ENCODE measurements at regions of chr3 and their contacts with region 1.

Region 1: GRCh38 chr3:31999907-32000439 is 18.4 kb downstream of the ZNF860 start:
- DNase-seq: no peak
- H3K4me3 ChIP-seq: no peak overlapping the region
- H3K27ac ChIP-seq: no peak overlapping the region
- H3K4me1 ChIP-seq: no peaks in the 10 kb centered on the region
- H3K27me3 ChIP-seq: no peaks in the 10 kb centered on the region
- CTCF ChIP-seq: no peak

Region 2: DNA sequence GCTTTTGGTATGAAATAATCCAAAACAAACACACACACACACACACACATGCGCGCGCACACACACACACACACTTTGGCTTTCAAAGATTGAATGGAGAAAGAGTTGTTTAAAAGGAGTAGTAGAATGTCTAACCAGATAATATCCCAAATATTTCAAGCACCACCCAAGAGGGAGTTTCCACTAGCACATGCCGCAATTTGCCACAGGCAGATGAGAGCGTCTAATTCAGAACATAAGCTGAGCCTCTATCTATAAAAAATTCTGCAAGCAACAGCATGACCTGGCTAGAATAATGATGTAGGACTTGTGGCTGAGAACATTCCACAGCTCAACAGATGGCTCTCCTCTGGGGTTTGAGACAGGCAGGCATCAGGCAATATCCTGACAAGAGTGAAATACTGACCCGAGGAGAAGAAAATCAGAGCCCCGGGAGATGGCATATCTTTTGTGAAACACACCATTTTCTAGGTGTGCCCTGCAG is 803.0 kb before region 1 on chr3:
- CTCF ChIA-PET with region 1: no interaction called
- POLR2A ChIA-PET with region 1: interaction called, 20 read pairs
- intact Hi-C with region 1: no loop called
- DNase-seq: no peak
- H3K4me3 ChIP-seq: no peak overlapping the region
- H3K27ac ChIP-seq: no peak overlapping the region
- H3K4me1 ChIP-seq: no peaks in the 10 kb centered on the region
- H3K27me3 ChIP-seq: no peaks in the 10 kb centered on the region
- CTCF ChIP-seq: no peak

Region 3: GRCh38 chr3:32781210-32781968 is 781.4 kb after region 1 on chr3:
- CTCF ChIA-PET with region 1: no interaction called
- POLR2A ChIA-PET with region 1: no interaction called
- intact Hi-C with region 1: no loop called
- DNase-seq: peak; percentile 44 to 83
- H3K4me3 ChIP-seq: peak overlapping the region; percentile 65
- H3K27ac ChIP-seq: no peak overlapping the region
- H3K4me1 ChIP-seq: no peaks in the 10 kb centered on the region
- H3K27me3 ChIP-seq: no peaks in the 10 kb centered on the region
- CTCF ChIP-seq: peak; percentile 57; the same call in 1 of the 2 replicates